CD14-positive monocyte (primary cell): ENCODE measurements at regions of chr7 and their contacts with region 1.

Region 1: GRCh38 chr7:64999165-65000004 is 7.1 kb downstream of the ERV3-1 start:
- DNase-seq: peak; percentile 91 to 95 (median 94)
- H3K4me3 ChIP-seq: peak overlapping the region in 1 of 3 experiments; percentile 57
- H3K4me3 Mint-ChIP-seq: no peak overlapping the region
- H3K27ac ChIP-seq: peak overlapping the region; percentile 95 to 100
- H3K27ac Mint-ChIP-seq: peak overlapping the region; percentile 88 to 97 (median 94)
- H3K4me1 ChIP-seq: peaks cover 30 to 33% of the 10 kb centered on the region in 2 donors
- H3K4me1 Mint-ChIP-seq: peaks cover 42% of the 10 kb centered on the region
- H3K27me3 ChIP-seq: no peaks in the 10 kb centered on the region
- H3K27me3 Mint-ChIP-seq: peaks cover 0 to 8% (median 0%) of the 10 kb centered on the region in 3 donors
- CTCF ChIP-seq: no peak

Region 2: GRCh38 chr7:65037740-65038678 is 38.6 kb after region 1 on chr7:
- intact Hi-C with region 1: loop called (anchors 5 kb)
- DNase-seq: peak; percentile 86 to 96 (median 96)
- H3K4me3 ChIP-seq: peak overlapping the region; percentile 69 to 78 (median 70)
- H3K4me3 Mint-ChIP-seq: peak overlapping the region; percentile 77 to 79
- H3K27ac ChIP-seq: peak overlapping the region; percentile 91
- H3K27ac Mint-ChIP-seq: peak overlapping the region; percentile 91 to 99 (median 97)
- H3K4me1 ChIP-seq: peaks cover 28 to 35% of the 10 kb centered on the region in 2 donors
- H3K4me1 Mint-ChIP-seq: peaks cover 38% of the 10 kb centered on the region
- H3K27me3 ChIP-seq: no peaks in the 10 kb centered on the region
- H3K27me3 Mint-ChIP-seq: peaks cover 0 to 5% (median 0%) of the 10 kb centered on the region in 3 donors
- CTCF ChIP-seq: no peak